HCT116 (cell line): ENCODE measurements at regions of chr7 and their contacts with region 1.

Region 1: GRCh38 chr7:95690367-95690947 is 81.9 kb upstream of the DYNC1I1 start:
- DNase-seq: peak; percentile 52
- ATAC-seq: peak; percentile 75
- H3K4me3 ChIP-seq: no peak overlapping the region
- H3K27ac ChIP-seq: no peak overlapping the region
- H3K4me1 ChIP-seq: no peaks in the 10 kb centered on the region
- H3K27me3 ChIP-seq: no peaks in the 10 kb centered on the region
- CTCF ChIP-seq: peak; percentile 43 to 94 (median 80)
- POLR2A ChIP-seq: no peak
- RAD21 ChIP-seq: peak; percentile 58

Region 2: DNA sequence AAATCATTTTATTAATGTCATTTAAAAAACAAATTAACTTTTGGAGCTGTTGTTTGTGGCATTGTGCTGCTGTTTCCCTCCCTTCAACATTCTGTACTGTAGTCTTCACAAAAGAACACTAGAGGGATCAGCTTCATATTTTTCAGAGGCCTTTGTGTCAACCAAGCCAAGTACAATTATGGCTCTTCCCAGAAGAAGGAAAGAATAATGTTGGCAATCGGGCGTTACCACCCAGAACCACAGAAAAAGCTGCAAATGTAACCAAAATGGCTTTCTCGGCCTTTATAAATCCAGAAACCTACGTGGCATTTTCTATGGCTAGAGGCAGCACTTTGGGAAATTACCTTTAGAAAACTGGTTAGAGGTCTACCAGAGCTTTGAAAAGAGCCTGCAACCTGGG is 1394.6 kb before region 1 on chr7:
- CTCF ChIA-PET with region 1: interaction called, 11 read pairs
- POLR2A ChIA-PET with region 1: no interaction called
- RAD21 ChIA-PET with region 1: no interaction called
- intact Hi-C with region 1: no loop called
- DNase-seq: no peak
- ATAC-seq: peak; percentile 68
- H3K4me3 ChIP-seq: no peak overlapping the region
- H3K27ac ChIP-seq: no peak overlapping the region
- H3K4me1 ChIP-seq: peaks cover 12 to 13% of the 10 kb centered on the region in 2 experiments
- H3K27me3 ChIP-seq: no peaks in the 10 kb centered on the region
- CTCF ChIP-seq: peak; percentile 26 to 45 (median 42); a peak in 4 of 6 replicates
- POLR2A ChIP-seq: no peak
- RAD21 ChIP-seq: peak; percentile 69

Region 3: DNA sequence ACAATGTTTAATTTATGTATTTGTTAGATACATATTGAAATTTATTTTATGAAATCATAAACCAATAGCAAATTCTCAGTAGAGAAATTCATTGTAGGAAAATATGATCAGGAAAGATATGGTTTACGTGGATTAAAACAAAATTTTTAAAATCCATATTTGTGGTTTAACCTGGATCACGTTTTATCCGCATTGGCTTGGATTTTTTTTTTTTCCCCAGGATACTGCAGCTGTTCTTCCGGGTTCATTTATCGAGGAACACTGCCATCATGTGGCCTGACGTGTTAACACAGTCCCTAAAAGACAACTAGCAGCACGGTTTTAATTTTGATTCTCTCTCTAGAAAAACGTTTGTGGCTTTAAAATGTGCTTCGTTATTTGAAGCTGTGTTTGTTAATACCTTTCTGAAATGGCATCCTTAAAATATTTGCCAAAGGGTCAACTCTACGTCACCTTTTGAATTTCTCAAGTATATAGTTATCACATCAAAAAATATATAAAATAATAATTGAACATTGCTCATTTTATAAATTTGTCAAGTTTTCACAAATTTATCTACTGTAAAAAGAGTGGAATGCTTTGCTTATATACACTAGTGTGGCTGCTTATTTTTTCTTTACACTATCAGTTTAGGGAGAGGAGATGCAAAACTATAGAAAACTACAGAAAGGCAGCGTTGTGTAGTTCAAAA is 213.4 kb before region 1 on chr7:
- CTCF ChIA-PET with region 1: interaction called, 26 read pairs
- POLR2A ChIA-PET with region 1: no interaction called
- RAD21 ChIA-PET with region 1: interaction called in 1 of 2 experiments, 3 read pairs
- intact Hi-C with region 1: no loop called
- DNase-seq: peak; percentile 62
- ATAC-seq: peak; percentile 72
- H3K4me3 ChIP-seq: no peak overlapping the region
- H3K27ac ChIP-seq: no peak overlapping the region
- H3K4me1 ChIP-seq: peaks cover 0 to 6% of the 10 kb centered on the region in 2 experiments; a peak in 1 of 4 replicates
- H3K27me3 ChIP-seq: no peaks in the 10 kb centered on the region
- CTCF ChIP-seq: peak; percentile 58 to 80 (median 62); a peak in 5 of 6 replicates
- POLR2A ChIP-seq: no peak
- RAD21 ChIP-seq: peak; percentile 82

Region 4: DNA sequence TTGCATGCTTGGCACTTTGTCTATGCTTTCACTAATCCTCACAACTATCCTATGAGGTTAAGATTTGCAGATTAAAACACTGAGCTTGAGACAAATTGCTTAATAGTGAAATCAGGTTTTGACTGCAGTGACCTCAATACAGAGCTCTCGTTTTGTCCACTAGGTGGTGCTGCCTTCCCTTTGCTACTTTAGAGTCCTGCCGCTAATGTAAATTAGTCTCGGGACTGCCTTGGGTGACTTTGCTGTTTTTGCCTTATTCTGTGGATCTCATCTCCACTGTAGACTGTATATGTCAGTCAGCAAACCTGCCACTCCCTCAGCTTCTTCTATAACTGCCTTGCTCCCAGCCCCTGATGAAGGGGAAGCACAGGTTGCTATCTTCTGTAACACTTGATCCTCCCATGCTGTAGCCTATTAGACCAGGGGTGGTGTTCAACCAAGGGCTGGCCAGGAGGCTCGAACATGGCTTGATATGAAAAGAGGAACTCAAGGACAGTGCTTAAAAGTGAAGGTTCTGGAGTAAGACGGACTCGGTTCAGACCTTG is 178.7 kb before region 1 on chr7:
- CTCF ChIA-PET with region 1: interaction called, 116 read pairs
- POLR2A ChIA-PET with region 1: interaction called, 4 read pairs
- RAD21 ChIA-PET with region 1: interaction called, 9 to 11 read pairs
- intact Hi-C with region 1: loop called (anchors 1 kb)
- DNase-seq: peak; percentile 63
- ATAC-seq: peak; percentile 93
- H3K4me3 ChIP-seq: no peak overlapping the region
- H3K27ac ChIP-seq: no peak overlapping the region
- H3K4me1 ChIP-seq: peaks cover 0 to 4% of the 10 kb centered on the region in 2 experiments; a peak in 2 of 4 replicates
- H3K27me3 ChIP-seq: peaks cover 4% of the 10 kb centered on the region; the same call in 1 of the 2 replicates
- CTCF ChIP-seq: peak; percentile 70 to 87 (median 83)
- POLR2A ChIP-seq: no peak
- RAD21 ChIP-seq: peak; percentile 73

Region 5: GRCh38 chr7:95545078-95545498 is 145.4 kb before region 1 on chr7:
- CTCF ChIA-PET with region 1: interaction called, 55 read pairs
- POLR2A ChIA-PET with region 1: no interaction called
- RAD21 ChIA-PET with region 1: interaction called in 1 of 2 experiments, 5 read pairs
- intact Hi-C with region 1: loop called (anchors 1 kb)
- DNase-seq: peak; percentile 47
- ATAC-seq: peak; percentile 93
- H3K4me3 ChIP-seq: peak overlapping the region; percentile 3 to 44
- H3K27ac ChIP-seq: no peak overlapping the region
- H3K4me1 ChIP-seq: peaks cover 5 to 15% of the 10 kb centered on the region in 2 experiments; a peak in 3 of 4 replicates
- H3K27me3 ChIP-seq: no peaks in the 10 kb centered on the region
- CTCF ChIP-seq: peak; percentile 61 to 80 (median 76); a peak in 5 of 6 replicates
- POLR2A ChIP-seq: no peak
- RAD21 ChIP-seq: peak; percentile 76